Naive thymus-derived CD4-positive, alpha-beta T cell (primary cell): ENCODE measurements at regions of chr11 and their contacts with region 1.

Region 1: GRCh38 chr11:95589893-95590612 is 199.5 kb downstream of the FAM76B start:
- DNase-seq: no peak
- ATAC-seq: no peak
- H3K4me3 ChIP-seq: no peak overlapping the region
- H3K4me3 Mint-ChIP-seq: no peak overlapping the region
- H3K27ac ChIP-seq: no peak overlapping the region
- H3K27ac Mint-ChIP-seq: no peak overlapping the region
- H3K4me1 ChIP-seq: no peaks in the 10 kb centered on the region
- H3K4me1 Mint-ChIP-seq: peaks cover 0 to 23% (median 7%) of the 10 kb centered on the region in 7 donors
- H3K27me3 ChIP-seq: no peaks in the 10 kb centered on the region
- H3K27me3 Mint-ChIP-seq: no peaks in the 10 kb centered on the region

Region 2: DNA sequence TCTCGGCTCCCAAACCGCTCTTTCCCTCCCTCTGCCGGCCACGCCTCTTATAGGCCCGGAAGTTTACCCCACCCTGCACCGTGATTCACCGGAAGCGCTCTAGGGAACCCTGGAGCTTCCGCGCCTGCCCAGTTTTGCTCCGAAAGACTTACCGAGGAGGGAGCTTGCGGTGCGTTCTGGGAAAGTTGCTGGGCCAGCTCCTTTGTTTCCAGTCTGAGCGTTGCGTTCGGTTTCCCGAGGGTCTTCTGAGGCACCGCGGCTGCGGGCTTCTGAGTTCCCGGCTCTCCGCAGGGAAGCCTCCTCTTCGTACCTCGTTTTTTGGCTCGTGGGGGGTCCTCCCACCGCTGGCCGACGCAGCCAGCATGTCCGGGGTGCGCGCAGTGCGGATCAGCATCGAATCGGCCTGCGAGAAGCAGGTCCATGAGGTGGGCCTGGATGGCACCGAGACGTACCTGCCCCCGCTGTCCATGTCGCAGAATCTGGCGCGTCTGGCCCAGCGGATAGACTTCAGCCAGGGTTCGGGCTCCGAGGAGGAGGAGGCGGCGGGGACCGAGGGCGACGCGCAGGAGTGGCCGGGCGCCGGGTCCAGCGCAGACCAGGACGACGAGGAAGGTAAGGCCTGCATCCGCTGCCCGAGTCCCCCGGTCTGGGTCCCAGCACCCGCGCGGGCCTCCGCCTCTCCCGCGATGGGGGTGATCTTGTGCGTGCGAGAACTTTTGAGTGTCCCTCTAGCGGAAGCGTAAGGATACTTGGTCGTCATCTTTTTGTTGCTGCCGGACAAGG is 1805.7 kb before region 1 on chr11 and contains the start of gene MED17:
- CTCF ChIA-PET with region 1: no interaction called
- POLR2A ChIA-PET with region 1: no interaction called
- intact Hi-C with region 1: no loop called
- DNase-seq: peak; percentile 64 to 87 (median 85)
- ATAC-seq: peak; percentile 97
- H3K4me3 ChIP-seq: peak within 1 kb of the TSS; percentile 77
- H3K4me3 Mint-ChIP-seq: peak within 1 kb of the TSS; percentile 93 to 100 (median 96)
- H3K27ac ChIP-seq: peak within 1 kb of the TSS; percentile 94
- H3K27ac Mint-ChIP-seq: peak within 1 kb of the TSS; percentile 81 to 97 (median 93)
- H3K4me1 ChIP-seq: peaks cover 22 to 37% of the 10 kb centered on the region in 2 donors
- H3K4me1 Mint-ChIP-seq: peaks cover 34 to 58% (median 48%) of the 10 kb centered on the region in 7 donors
- H3K27me3 ChIP-seq: no peaks in the 10 kb centered on the region
- H3K27me3 Mint-ChIP-seq: no peaks in the 10 kb centered on the region
- total RNA-seq, gene MED17: 47.7 to 75.9 (median 65.6) TPM

Region 3: GRCh38 chr11:95575517-95575916 is 14.5 kb before region 1 on chr11:
- CTCF ChIA-PET with region 1: no interaction called
- POLR2A ChIA-PET with region 1: no interaction called
- intact Hi-C with region 1: loop called in 1 of 2 experiments (anchors 2 kb)
- DNase-seq: no peak
- ATAC-seq: no peak
- H3K4me3 ChIP-seq: no peak overlapping the region
- H3K4me3 Mint-ChIP-seq: no peak overlapping the region
- H3K27ac ChIP-seq: no peak overlapping the region
- H3K27ac Mint-ChIP-seq: no peak overlapping the region
- H3K4me1 ChIP-seq: no peaks in the 10 kb centered on the region
- H3K4me1 Mint-ChIP-seq: peaks cover 0 to 5% (median 0%) of the 10 kb centered on the region in 7 donors
- H3K27me3 ChIP-seq: no peaks in the 10 kb centered on the region
- H3K27me3 Mint-ChIP-seq: no peaks in the 10 kb centered on the region